Psoas muscle (tissue), 8 donors: ENCODE measurements at regions of chr3 and their contacts with region 1.

Region 1: DNA sequence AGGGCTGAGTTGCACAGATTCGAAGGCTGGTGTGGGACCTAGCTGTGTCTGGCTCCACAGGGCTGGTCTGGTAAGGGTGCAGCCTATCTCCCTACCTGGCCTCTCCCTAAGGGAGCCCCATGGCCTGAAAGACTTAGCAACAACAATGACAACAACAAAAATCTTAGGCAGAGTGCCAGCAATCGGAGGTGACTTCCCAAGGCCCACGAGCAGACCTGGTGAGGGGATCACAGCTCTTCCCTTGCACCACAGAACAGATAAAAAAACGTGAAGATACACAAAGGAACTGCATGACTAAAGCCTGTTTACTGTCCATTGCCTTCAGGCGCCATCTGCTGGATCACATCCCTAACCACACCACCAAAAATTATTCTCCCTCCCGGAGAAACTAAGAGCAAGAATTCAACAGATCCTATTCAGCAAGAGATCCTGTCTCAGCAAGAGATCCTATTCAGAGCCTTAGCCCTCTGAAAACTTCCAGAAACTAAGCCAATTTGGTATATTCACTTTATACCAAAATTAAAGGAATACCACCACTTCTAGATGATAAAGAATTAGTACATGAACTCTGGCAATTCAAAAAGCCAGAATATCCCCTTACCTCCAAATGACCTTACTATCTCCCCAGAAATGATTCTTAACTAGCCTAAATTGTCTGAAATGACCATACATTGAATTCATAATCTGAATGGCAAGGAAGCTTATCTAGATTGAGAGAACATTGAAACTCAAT is 24.1 kb upstream of the OR5K4 start:
- DNase-seq: peak; percentile 18 to 24
- ATAC-seq: peak in 2 of 4 donors; percentile 33 to 52
- H3K4me3 ChIP-seq: no peak overlapping the region
- H3K27ac ChIP-seq: no peak overlapping the region
- H3K4me1 ChIP-seq: no peaks in the 10 kb centered on the region
- H3K27me3 ChIP-seq: peaks cover 0 to 3% (median 0%) of the 10 kb centered on the region in 3 donors
- CTCF ChIP-seq: peak; percentile 47

Region 2: GRCh38 chr3:98039322-98040024 is 290.1 kb before region 1 on chr3:
- intact Hi-C with region 1: loop called in 1 of 2 experiments (anchors 2 kb)
- DNase-seq: peak in 1 of 2 donors; percentile 28
- ATAC-seq: peak; percentile 87 to 93 (median 90)
- H3K4me3 ChIP-seq: peak overlapping the region; percentile 42
- H3K27ac ChIP-seq: no peak overlapping the region
- H3K4me1 ChIP-seq: no peaks in the 10 kb centered on the region
- H3K27me3 ChIP-seq: peaks cover 0 to 4% (median 4%) of the 10 kb centered on the region in 3 donors
- CTCF ChIP-seq: peak; percentile 79

Region 3: DNA sequence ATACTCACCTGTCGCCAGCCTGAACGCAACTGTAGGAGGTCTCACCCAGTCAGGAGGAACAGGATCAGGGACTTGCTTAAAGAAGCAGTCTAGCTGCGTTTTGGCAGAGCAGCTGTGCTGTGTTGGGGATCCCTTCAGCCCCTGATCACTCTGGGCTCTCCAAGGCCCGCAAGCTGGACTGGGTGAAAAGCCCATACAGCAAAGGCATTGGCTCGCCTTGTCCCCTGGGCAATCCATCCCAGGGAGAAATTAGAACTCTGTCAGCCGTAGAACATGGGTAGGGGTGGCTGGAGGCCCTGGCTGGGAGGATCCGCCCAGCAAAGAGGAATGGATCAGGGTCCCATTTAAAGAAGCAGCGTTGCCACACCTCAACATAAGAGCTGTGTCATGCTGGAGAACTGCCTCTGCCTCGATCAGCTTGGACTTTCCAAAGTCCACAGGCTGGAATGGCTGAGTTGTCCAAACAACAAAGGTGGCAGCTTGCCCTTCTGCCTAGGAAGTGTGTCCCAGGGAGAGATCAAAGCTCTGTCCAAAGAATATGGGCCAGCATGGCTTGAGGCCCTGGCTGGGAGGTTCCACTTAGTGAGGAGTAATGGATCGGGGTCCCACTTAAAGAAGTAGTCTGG is 38.1 kb before region 1 on chr3:
- intact Hi-C with region 1: no loop called
- DNase-seq: no peak
- ATAC-seq: no peak
- H3K4me3 ChIP-seq: no peak overlapping the region
- H3K27ac ChIP-seq: no peak overlapping the region
- H3K4me1 ChIP-seq: no peaks in the 10 kb centered on the region
- H3K27me3 ChIP-seq: no peaks in the 10 kb centered on the region
- CTCF ChIP-seq: no peak

Region 4: DNA sequence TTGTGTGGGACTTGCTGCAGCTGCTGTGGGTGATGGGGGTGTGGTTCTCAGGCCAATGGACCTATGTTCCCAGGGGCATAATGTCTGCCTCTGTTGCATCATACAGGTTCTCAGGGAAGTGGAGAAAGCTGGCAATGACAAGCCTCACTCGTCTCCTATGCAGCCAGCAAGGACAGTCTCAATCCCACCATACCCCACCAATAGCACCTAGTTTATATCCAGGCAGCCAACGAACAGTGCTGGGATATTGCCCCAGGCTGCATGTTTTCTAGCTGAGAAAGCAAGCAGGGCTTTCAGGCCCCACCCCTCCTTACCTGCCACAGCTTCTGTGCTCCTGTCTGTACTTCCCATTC is 153.5 kb after region 1 on chr3:
- intact Hi-C with region 1: no loop called
- DNase-seq: no peak
- ATAC-seq: no peak
- H3K4me3 ChIP-seq: no peak overlapping the region
- H3K27ac ChIP-seq: no peak overlapping the region
- H3K4me1 ChIP-seq: no peaks in the 10 kb centered on the region
- H3K27me3 ChIP-seq: no peaks in the 10 kb centered on the region
- CTCF ChIP-seq: no peak